Endothelial cell of umbilical vein (primary cell): ENCODE measurements at regions of chr4 and their contacts with region 1.

Region 1: DNA sequence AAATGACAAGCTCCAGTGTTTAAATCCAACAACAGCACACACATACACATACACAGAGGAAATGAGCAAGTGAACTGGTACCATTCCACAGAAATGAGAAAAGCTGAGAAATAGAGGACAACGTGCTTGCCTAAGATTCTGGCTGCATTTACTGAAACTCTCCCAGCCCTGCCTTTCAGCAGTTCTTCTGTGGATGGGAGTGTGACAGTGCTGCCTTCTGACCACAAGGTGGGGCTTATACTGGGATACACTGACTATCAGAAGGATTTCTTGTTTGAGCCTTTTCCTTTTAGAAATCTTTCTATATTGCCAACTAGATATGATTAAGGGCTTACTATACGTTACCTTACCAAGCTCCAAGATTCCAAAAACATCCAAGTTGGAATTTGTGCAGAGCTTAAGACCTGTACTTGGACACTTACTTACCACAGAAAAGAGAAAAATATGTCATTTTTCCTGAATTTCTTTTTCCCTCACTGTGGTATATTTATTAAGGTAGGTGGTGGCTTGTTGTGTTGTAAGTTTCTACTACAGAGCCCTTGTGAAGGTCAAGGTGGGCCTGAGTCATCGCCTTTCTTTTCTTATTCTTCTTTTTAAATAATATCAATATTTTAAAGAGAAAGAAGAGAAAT is 10.7 kb upstream of the CXCL8 start:
- DNase-seq: peak; percentile 85
- H3K4me3 ChIP-seq: no peak overlapping the region
- H3K27ac ChIP-seq: peak overlapping the region; percentile 10
- H3K4me1 ChIP-seq: peaks cover 69% of the 10 kb centered on the region
- H3K27me3 ChIP-seq: no peaks in the 10 kb centered on the region
- CTCF ChIP-seq: peak; percentile 79 to 87
- POLR2A ChIP-seq: no peak

Region 2: DNA sequence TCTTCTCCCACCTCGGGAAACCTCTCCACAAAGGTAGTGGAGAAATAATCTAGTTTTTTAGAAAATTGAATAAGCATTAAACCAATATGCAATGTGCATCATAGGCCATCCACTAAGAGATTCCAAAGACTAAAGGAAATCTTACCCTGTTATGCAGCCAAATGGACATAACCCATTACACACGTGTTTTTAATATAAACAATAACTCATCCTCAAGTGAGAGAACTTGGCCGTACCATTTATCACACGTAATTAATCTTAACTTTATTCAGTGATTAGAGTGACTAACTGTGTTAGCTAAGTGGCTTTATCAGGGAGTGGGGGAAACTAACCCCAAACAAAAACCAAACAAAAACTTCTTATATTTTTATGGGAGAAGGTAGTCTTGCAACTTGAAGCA is 190.3 kb before region 1 on chr4:
- CTCF ChIA-PET with region 1: no interaction called
- POLR2A ChIA-PET with region 1: no interaction called
- dilution Hi-C with region 1: no loop called
- intact Hi-C with region 1: no loop called
- DNase-seq: no peak
- H3K4me3 ChIP-seq: no peak overlapping the region
- H3K27ac ChIP-seq: no peak overlapping the region
- H3K4me1 ChIP-seq: no peaks in the 10 kb centered on the region
- H3K27me3 ChIP-seq: peaks cover 0 to 3% of the 10 kb centered on the region in 2 experiments
- CTCF ChIP-seq: no peak
- POLR2A ChIP-seq: no peak

Region 3: DNA sequence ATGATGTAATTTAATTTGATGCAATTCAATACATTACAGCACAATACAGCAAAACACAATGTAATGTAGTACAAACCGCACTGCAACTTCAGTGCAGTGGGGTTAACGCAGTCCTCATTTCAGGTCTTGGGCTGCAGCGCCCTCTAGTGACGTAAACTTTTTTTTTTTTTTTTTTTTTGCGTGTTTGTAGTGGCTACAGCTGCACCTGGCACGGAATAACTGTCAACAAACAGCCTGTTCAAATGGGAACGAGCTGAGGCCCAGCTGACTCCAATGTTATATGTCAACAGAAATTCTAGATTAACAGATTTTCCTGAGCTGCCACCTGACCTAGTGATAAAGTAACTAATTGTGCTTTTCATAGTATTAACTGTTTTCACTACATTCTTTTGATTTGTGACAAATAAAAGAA is 75.9 kb before region 1 on chr4:
- CTCF ChIA-PET with region 1: no interaction called
- POLR2A ChIA-PET with region 1: no interaction called
- dilution Hi-C with region 1: no loop called
- intact Hi-C with region 1: no loop called
- DNase-seq: peak; percentile 91
- H3K4me3 ChIP-seq: no peak overlapping the region
- H3K27ac ChIP-seq: no peak overlapping the region
- H3K4me1 ChIP-seq: no peaks in the 10 kb centered on the region
- H3K27me3 ChIP-seq: no peaks in the 10 kb centered on the region
- CTCF ChIP-seq: peak; percentile 33 to 41
- POLR2A ChIP-seq: no peak

Region 4: DNA sequence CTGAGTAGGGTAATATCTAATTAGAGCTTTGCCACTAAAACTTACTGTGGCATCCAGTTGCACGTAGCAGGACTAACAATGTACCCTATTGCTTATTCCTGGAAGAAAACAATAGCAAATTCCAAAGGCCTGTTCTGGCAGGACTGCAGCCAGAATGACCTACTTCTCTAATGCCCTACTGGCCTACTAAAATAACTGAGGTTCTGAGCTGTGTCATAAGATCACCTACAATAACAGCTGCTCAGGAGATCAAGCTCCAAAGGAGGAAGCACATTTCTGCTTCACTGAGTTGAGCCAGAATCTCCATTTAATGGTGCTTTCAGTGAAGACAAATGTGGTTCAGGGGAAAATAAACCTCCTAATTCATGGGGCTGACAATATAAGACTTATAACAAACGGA is 31.4 kb before region 1 on chr4:
- CTCF ChIA-PET with region 1: interaction called, 15 read pairs
- POLR2A ChIA-PET with region 1: interaction called, 5 read pairs
- dilution Hi-C with region 1: no loop called
- intact Hi-C with region 1: no loop called
- DNase-seq: peak; percentile 95
- H3K4me3 ChIP-seq: no peak overlapping the region
- H3K27ac ChIP-seq: peak overlapping the region; percentile 38
- H3K4me1 ChIP-seq: peaks cover 19% of the 10 kb centered on the region
- H3K27me3 ChIP-seq: no peaks in the 10 kb centered on the region
- CTCF ChIP-seq: no peak
- POLR2A ChIP-seq: no peak

Region 5: DNA sequence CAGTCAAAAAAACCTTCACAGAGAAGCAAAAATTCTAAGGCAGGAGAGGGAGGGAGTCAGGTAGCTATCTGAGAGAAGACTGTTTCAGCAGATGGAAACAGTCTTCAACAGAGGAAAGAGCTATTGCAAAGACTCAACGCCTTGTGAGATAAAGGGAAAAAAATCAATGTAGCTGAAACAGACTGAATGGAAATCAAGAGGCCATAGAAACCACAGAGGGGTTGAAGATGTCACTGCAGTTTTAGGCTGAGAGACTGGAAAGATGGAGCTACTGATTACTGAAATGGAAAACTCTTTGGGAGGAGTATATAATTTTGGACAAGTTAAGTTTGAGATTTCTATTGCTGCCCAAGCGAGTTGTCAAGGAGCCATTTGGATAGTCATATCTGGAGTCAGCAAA is 17.7 kb before region 1 on chr4:
- CTCF ChIA-PET with region 1: interaction called, 14 read pairs
- POLR2A ChIA-PET with region 1: no interaction called
- dilution Hi-C with region 1: no loop called
- intact Hi-C with region 1: loop called (anchors 1 kb)
- DNase-seq: no peak
- H3K4me3 ChIP-seq: no peak overlapping the region
- H3K27ac ChIP-seq: no peak overlapping the region
- H3K4me1 ChIP-seq: peaks cover 25% of the 10 kb centered on the region
- H3K27me3 ChIP-seq: no peaks in the 10 kb centered on the region
- CTCF ChIP-seq: no peak
- POLR2A ChIP-seq: no peak

Region 6: GRCh38 chr4:73751166-73751565 is 21.5 kb after region 1 on chr4:
- CTCF ChIA-PET with region 1: no interaction called
- POLR2A ChIA-PET with region 1: no interaction called
- dilution Hi-C with region 1: no loop called
- intact Hi-C with region 1: no loop called
- DNase-seq: no peak
- H3K4me3 ChIP-seq: no peak overlapping the region
- H3K27ac ChIP-seq: no peak overlapping the region
- H3K4me1 ChIP-seq: no peaks in the 10 kb centered on the region
- H3K27me3 ChIP-seq: no peaks in the 10 kb centered on the region
- CTCF ChIP-seq: no peak
- POLR2A ChIP-seq: no peak

Region 7: DNA sequence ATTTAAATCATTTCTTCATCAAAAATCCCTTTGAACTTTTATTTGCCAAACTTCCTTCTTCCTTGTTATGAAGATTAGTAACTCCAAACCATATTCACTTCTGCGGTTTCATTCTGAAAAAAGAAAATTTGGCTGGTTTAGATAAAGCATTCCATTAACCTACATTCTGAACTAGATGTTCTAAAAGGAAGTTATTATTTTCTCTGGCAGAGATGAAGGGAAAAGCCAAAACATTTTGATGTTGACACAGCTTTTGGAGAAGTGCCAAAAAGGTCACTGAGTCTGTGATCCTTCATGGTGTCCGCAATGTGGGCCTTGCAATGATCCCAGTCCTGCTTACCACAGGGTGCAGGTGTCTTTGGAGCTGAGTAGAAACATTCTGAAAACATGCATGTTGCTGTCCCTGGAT is 46.7 kb after region 1 on chr4:
- CTCF ChIA-PET with region 1: interaction called, 5 read pairs
- POLR2A ChIA-PET with region 1: no interaction called
- dilution Hi-C with region 1: no loop called
- intact Hi-C with region 1: loop called (anchors 5 kb)
- DNase-seq: peak; percentile 97
- H3K4me3 ChIP-seq: no peak overlapping the region
- H3K27ac ChIP-seq: peak overlapping the region; percentile 62
- H3K4me1 ChIP-seq: peaks cover 33% of the 10 kb centered on the region
- H3K27me3 ChIP-seq: no peaks in the 10 kb centered on the region
- CTCF ChIP-seq: no peak
- POLR2A ChIP-seq: peak; percentile 49

Region 8: GRCh38 chr4:73869130-73870050 is 139.7 kb after region 1 on chr4 and contains the start of gene CXCL1:
- CTCF ChIA-PET with region 1: interaction called, 26 read pairs
- POLR2A ChIA-PET with region 1: no interaction called
- dilution Hi-C with region 1: no loop called
- intact Hi-C with region 1: loop called (anchors 1 kb)
- DNase-seq: peak; percentile 52
- H3K4me3 ChIP-seq: peak within 1 kb of the TSS; percentile 49 to 81 (median 67)
- H3K27ac ChIP-seq: peak within 1 kb of the TSS; percentile 55
- H3K4me1 ChIP-seq: peaks cover 35% of the 10 kb centered on the region
- H3K27me3 ChIP-seq: no peaks in the 10 kb centered on the region
- CTCF ChIP-seq: no peak
- POLR2A ChIP-seq: peak; percentile 68
- total RNA-seq, gene CXCL1: 9.0 and 20.0 TPM in 2 replicates

Region 9: GRCh38 chr4:74038161-74039064 is 308.8 kb after region 1 on chr4 and contains the start of gene CXCL3:
- CTCF ChIA-PET with region 1: interaction called, 11 read pairs
- POLR2A ChIA-PET with region 1: no interaction called
- dilution Hi-C with region 1: no loop called
- intact Hi-C with region 1: loop called (anchors 1 kb)
- DNase-seq: peak; percentile 67
- H3K4me3 ChIP-seq: peak within 1 kb of the TSS; percentile 75 to 86 (median 82)
- H3K27ac ChIP-seq: peak within 1 kb of the TSS; percentile 88
- H3K4me1 ChIP-seq: peaks cover 11% of the 10 kb centered on the region
- H3K27me3 ChIP-seq: no peaks in the 10 kb centered on the region
- CTCF ChIP-seq: peak; percentile 23 to 44
- POLR2A ChIP-seq: peak; percentile 22
- total RNA-seq, gene CXCL3: 1.3 and 1.4 TPM in 2 replicates

Region 10: GRCh38 chr4:74117024-74117534 is 387.4 kb after region 1 on chr4:
- CTCF ChIA-PET with region 1: no interaction called
- POLR2A ChIA-PET with region 1: no interaction called
- dilution Hi-C with region 1: no loop called
- intact Hi-C with region 1: loop called (anchors 5 kb)
- DNase-seq: peak; percentile 99
- H3K4me3 ChIP-seq: no peak overlapping the region
- H3K27ac ChIP-seq: peak overlapping the region; percentile 91
- H3K4me1 ChIP-seq: peaks cover 18% of the 10 kb centered on the region
- H3K27me3 ChIP-seq: no peaks in the 10 kb centered on the region
- CTCF ChIP-seq: no peak
- POLR2A ChIP-seq: no peak